ENCODE measurements at regions of chr4 and their contacts with region 1.

Region 1: DNA sequence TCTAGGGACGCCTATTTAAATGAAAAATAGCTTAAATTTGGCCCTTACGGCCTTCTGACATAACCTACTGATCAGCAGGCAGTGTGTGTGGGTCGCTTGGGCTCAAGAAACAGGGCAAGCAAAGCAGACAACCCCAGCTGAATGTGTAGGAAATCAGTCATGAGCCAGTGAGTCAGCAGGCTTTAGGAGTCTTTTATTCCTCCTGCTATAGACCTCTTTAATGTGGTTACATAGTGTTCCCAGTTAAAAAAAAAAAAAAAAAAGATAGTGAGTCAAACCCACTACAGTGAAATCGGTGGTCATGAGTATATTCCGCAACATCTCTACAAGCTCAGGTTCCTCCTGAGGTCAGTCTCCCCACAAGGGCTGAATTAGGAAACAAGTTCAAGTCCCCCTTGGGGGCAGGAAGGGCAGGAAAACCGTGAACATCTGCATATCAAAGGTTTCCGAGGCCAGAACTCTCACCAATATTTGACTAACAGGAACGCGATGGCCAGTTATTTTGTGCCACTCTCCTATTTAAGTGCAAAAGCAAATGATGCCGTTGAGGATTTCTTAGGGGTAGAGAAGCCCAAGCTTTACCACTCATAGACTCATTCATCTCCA is 32.7 kb downstream of the ACSL1 start:
- DNase-seq: peak; percentile 84
- H3K4me3 ChIP-seq: no peak overlapping the region
- H3K27ac ChIP-seq: peak overlapping the region; percentile 73
- H3K27me3 ChIP-seq: no peaks in the 10 kb centered on the region
- CTCF ChIP-seq: no peak

Region 2: DNA sequence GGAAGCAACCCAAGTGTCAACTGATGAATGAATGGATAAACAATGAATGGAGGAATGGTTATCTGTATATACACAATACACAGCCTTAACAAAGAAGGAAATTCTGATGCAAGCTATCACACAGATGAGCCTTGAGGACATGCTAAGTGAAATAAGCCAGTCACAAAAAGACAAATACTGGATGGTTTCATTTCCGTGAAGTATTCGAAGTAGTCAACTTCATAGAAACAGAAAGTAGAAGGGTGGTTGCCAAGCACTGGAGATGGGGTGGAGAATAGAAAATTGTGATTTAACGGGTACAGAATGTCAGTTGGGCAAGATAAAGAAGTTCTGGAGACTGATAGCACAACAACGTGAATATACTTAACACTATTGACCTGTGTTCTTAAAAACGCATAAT is 87.4 kb before region 1 on chr4:
- CTCF ChIA-PET with region 1: no interaction called
- POLR2A ChIA-PET with region 1: no interaction called
- DNase-seq: no peak
- H3K4me3 ChIP-seq: no peak overlapping the region
- H3K27ac ChIP-seq: no peak overlapping the region
- H3K27me3 ChIP-seq: no peaks in the 10 kb centered on the region
- CTCF ChIP-seq: no peak

Region 3: GRCh38 chr4:184819786-184820185 is 26.7 kb after region 1 on chr4:
- CTCF ChIA-PET with region 1: no interaction called
- POLR2A ChIA-PET with region 1: interaction called, 13 read pairs
- DNase-seq: no peak
- H3K4me3 ChIP-seq: no peak overlapping the region
- H3K27ac ChIP-seq: no peak overlapping the region
- H3K27me3 ChIP-seq: no peaks in the 10 kb centered on the region
- CTCF ChIP-seq: no peak